Psoas muscle (tissue), 8 donors: ENCODE measurements at regions of chr15 and their contacts with region 1.

Region 1: GRCh38 chr15:60438646-60439045 is 40.3 kb downstream of the ICE2 start:
- DNase-seq: no peak
- ATAC-seq: no peak
- H3K4me3 ChIP-seq: no peak overlapping the region
- H3K27ac ChIP-seq: no peak overlapping the region
- H3K4me1 ChIP-seq: no peaks in the 10 kb centered on the region
- H3K27me3 ChIP-seq: no peaks in the 10 kb centered on the region
- CTCF ChIP-seq: no peak

Region 2: DNA sequence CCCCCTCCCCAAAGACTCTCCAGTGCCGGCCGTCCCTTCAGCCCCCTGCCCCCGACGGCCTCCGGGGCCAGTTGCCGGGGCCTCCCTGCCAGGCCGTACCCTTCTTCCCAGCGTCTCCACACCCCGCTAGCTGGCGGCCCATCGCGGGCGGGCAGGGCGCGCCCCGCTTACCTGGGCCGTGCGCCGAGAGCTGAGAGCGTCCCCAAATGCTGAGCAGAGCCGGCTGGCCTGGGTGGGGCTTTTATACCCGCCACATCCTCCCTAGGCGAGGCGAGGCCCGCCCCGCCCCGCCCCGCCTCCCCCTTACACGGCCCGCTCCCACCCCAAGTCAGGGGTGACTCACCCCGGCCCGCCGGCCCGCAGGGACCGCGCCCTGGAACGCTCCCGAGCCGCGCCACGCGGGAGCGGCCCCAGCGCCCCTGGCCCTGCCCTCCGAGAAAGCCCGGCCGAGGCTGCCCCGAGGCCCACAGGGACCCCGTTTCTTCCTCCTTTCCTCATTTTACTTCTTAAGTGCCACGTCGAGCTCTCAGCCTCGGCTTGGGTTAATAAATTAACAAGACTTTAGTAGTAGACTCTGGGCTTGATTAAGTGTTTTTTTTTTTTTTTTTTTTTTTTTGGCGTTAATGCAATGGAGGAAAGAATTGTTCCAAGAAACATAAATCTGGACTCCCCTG is 40.7 kb before region 1 on chr15 and contains the start of gene ANXA2:
- intact Hi-C with region 1: loop called in 1 of 2 experiments (anchors 5 kb)
- DNase-seq: peak; percentile 91 to 95
- ATAC-seq: peak; percentile 81 to 84 (median 82)
- H3K4me3 ChIP-seq: peak within 1 kb of the TSS; percentile 80
- H3K27ac ChIP-seq: peak within 1 kb of the TSS; percentile 93
- H3K4me1 ChIP-seq: peaks cover 35% of the 10 kb centered on the region
- H3K27me3 ChIP-seq: no peaks in the 10 kb centered on the region
- CTCF ChIP-seq: no peak
- total RNA-seq, gene ANXA2: 140 to 522 (median 378) TPM

Region 3: GRCh38 chr15:60423537-60423936 is 15.1 kb before region 1 on chr15:
- intact Hi-C with region 1: loop called in 1 of 2 experiments (anchors 1 kb)
- DNase-seq: no peak
- ATAC-seq: no peak
- H3K4me3 ChIP-seq: no peak overlapping the region
- H3K27ac ChIP-seq: no peak overlapping the region
- H3K4me1 ChIP-seq: peaks cover under 1% of the 10 kb centered on the region
- H3K27me3 ChIP-seq: no peaks in the 10 kb centered on the region
- CTCF ChIP-seq: no peak